ENCODE measurements at regions of chr19 and their contacts with region 1.

Region 1: GRCh38 chr19:38647368-38647965 is at the start of gene ACTN4:
- DNase-seq: peak; percentile 98
- H3K4me3 ChIP-seq: peak within 1 kb of the TSS; percentile 96 to 99 (median 98)
- H3K27ac ChIP-seq: peak within 1 kb of the TSS; percentile 70
- H3K4me1 ChIP-seq: peaks cover 28% of the 10 kb centered on the region
- H3K27me3 ChIP-seq: no peaks in the 10 kb centered on the region
- CTCF ChIP-seq: no peak
- POLR2A ChIP-seq: peak; percentile 97
- total RNA-seq, gene ACTN4: 693 and 748 TPM in 2 replicates

Region 2: DNA sequence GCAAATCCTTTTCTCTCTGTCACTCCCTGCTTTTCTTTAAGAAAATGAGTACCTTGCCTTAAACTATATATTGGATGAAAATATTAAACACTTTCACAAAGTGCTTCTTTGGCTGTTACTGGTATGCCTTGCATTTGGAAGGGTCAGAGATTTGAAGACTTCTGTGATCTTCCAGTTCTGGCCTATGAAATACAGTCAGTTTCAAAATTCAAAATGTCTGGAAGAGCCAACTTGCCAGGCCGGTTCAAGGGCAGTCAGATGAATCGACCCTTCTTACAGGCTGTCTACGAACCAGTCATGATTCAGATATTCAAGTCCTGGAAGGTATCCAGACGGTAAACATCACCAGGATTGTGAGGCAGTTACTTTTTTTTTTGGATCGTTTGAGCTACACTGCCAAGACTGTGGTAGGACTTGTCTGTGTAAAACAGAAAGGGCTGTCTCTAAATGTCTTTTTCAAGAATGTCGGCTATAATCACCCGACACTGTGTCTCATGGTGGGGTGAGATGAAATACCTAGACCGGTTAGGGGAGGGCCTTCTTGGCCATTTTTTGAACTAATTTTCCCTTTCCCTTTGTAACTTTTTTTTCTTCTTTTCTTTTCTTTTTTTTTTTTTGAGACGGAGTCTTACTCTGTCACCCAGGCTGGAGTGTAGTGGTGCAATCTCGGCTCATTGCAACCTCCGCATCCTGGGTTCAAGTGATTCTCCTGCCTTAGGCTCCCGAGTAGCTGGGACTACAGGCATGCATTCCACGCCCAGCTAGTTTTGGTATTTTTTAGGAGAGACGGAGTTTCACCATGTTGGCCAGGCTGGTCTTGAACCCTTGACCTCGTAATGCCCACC is 11.2 kb after region 1 on chr19:
- CTCF ChIA-PET with region 1: interaction called, 12 read pairs
- POLR2A ChIA-PET with region 1: interaction called, 28 read pairs
- dilution Hi-C with region 1: no loop called
- intact Hi-C with region 1: no loop called
- DNase-seq: peak; percentile 98
- H3K4me3 ChIP-seq: no peak overlapping the region
- H3K27ac ChIP-seq: peak overlapping the region; percentile 87
- H3K4me1 ChIP-seq: peaks cover 66% of the 10 kb centered on the region
- H3K27me3 ChIP-seq: no peaks in the 10 kb centered on the region
- CTCF ChIP-seq: no peak
- POLR2A ChIP-seq: no peak

Region 3: GRCh38 chr19:38666663-38667511 is 19.4 kb after region 1 on chr19:
- CTCF ChIA-PET with region 1: interaction called, 5 read pairs
- POLR2A ChIA-PET with region 1: interaction called, 9 read pairs
- dilution Hi-C with region 1: no loop called
- intact Hi-C with region 1: loop called (anchors 1 kb)
- DNase-seq: peak; percentile 90
- H3K4me3 ChIP-seq: peak overlapping the region in 1 of 3 experiments; percentile 5
- H3K27ac ChIP-seq: peak overlapping the region; percentile 95
- H3K4me1 ChIP-seq: peaks cover 82% of the 10 kb centered on the region
- H3K27me3 ChIP-seq: no peaks in the 10 kb centered on the region
- CTCF ChIP-seq: no peak
- POLR2A ChIP-seq: peak; percentile 12

Region 4: DNA sequence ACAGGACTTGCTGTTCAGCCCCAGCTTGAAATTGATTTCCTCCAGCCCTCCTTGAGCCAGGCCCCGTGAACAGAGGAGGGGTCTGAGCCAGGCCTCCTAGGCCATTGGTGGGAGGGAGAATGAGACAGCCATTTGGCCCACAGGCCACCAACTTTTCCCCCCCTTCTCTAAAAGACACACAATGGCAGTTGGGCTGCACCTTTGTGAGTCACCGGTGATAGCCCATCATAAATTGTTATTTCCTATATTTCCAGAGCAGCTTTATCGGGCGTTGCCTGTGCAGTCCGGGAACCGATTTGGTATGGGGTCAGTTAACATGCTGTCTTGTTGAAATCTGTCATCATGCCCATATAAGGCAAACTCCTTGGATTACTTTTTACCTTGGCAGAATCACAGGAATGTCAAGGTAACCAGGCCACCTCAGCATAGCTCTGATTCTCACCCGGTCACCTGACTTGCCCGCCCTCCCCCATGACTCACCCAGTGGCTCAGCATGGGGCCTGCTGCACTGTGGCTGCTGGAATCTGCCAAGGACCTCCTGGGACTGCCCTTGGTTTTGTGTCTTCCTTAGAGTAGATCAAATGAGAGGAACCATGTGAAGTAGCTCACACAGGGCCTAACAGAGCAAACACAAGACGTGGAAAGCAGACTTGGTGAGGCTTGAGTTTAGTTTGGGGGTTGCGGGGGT is 36.1 kb after region 1 on chr19:
- CTCF ChIA-PET with region 1: interaction called, 8 read pairs
- POLR2A ChIA-PET with region 1: interaction called, 6 read pairs
- dilution Hi-C with region 1: no loop called
- intact Hi-C with region 1: loop called (anchors 1 kb)
- DNase-seq: peak; percentile 89
- H3K4me3 ChIP-seq: no peak overlapping the region
- H3K27ac ChIP-seq: peak overlapping the region; percentile 90
- H3K4me1 ChIP-seq: peaks cover 66% of the 10 kb centered on the region
- H3K27me3 ChIP-seq: no peaks in the 10 kb centered on the region
- CTCF ChIP-seq: no peak
- POLR2A ChIP-seq: no peak

Measured in endothelial cell of umbilical vein (primary cell).